Mammary epithelial cell (primary cell): ENCODE measurements at regions of chr7 and their contacts with region 1.

Region 1: GRCh38 chr7:26365077-26365900 is 73.6 kb downstream of the SNX10 start:
- DNase-seq: peak; percentile 54
- H3K4me3 ChIP-seq: no peak overlapping the region
- H3K27ac ChIP-seq: no peak overlapping the region
- H3K4me1 ChIP-seq: peaks cover 2% of the 10 kb centered on the region
- H3K27me3 ChIP-seq: no peaks in the 10 kb centered on the region
- CTCF ChIP-seq: peak; percentile 63 to 75

Region 2: GRCh38 chr7:26061688-26062150 is 303.6 kb before region 1 on chr7:
- CTCF ChIA-PET with region 1: no interaction called
- dilution Hi-C with region 1: no loop called
- in situ Hi-C with region 1: no loop called
- intact Hi-C with region 1: loop called (anchors 1 kb)
- DNase-seq: peak; percentile 56
- H3K4me3 ChIP-seq: no peak overlapping the region
- H3K27ac ChIP-seq: no peak overlapping the region
- H3K4me1 ChIP-seq: peaks cover 4% of the 10 kb centered on the region
- H3K27me3 ChIP-seq: no peaks in the 10 kb centered on the region
- CTCF ChIP-seq: peak; percentile 85 to 92

Region 3: GRCh38 chr7:26090927-26091519 is 274.3 kb before region 1 on chr7:
- CTCF ChIA-PET with region 1: no interaction called
- dilution Hi-C with region 1: no loop called
- in situ Hi-C with region 1: loop called in 1 of 2 experiments (anchors 25 kb)
- intact Hi-C with region 1: loop called (anchors 1 kb)
- DNase-seq: peak; percentile 44
- H3K4me3 ChIP-seq: no peak overlapping the region
- H3K27ac ChIP-seq: no peak overlapping the region
- H3K4me1 ChIP-seq: peaks cover 33% of the 10 kb centered on the region
- H3K27me3 ChIP-seq: no peaks in the 10 kb centered on the region
- CTCF ChIP-seq: peak; percentile 56 to 77

Region 4: DNA sequence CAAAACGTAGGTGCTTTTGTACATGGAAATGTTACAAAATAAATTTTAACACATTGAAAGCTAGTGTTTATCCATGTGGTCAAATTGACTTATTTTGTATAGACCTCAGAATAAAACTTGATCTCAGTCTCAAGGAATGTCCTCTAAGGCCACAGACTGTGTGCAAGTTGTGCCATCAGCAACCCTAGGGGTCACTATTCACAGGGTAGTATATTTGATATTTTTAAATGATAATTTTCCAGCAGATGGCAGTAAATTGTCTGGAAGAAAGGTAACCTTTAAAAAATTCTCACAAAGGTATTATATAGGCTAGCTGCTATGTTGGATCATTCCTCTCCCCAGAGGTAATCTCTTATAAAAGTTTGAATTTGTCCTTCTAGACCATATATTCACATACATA is 86.5 kb before region 1 on chr7:
- CTCF ChIA-PET with region 1: no interaction called
- dilution Hi-C with region 1: no loop called
- in situ Hi-C with region 1: no loop called
- intact Hi-C with region 1: loop called (anchors 1 kb)
- DNase-seq: peak; percentile 35
- H3K4me3 ChIP-seq: no peak overlapping the region
- H3K27ac ChIP-seq: no peak overlapping the region
- H3K4me1 ChIP-seq: no peaks in the 10 kb centered on the region
- H3K27me3 ChIP-seq: no peaks in the 10 kb centered on the region
- CTCF ChIP-seq: peak; percentile 24 to 48

Region 5: DNA sequence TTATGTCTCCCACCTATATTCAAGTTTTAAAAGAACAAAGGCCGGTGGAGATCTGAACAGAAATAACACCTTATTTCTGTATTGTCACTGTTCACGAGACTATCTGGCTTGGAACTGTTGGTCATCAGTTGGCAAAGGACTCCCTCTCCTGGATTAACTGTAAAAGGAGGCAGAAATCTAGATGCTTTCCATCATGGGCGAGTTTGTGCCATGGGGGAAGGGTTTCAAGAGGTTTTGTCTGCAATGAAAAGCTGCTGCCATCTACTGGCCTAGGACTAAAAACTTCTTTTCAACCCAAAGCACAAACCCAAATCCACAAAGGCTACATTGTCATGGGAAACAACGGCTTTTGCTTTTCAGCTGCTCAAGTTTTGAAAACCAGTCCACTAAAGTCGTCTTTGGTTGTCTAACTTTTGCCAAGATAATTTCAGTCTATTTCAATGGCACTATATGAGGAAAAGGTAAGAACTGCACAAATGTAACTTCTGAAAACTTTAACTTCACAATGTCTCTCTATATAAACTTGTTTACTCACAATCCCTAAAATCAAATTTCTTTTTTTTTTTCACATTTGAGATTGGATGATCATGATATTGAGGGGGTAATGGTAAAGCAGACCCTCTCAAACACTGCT is 302.3 kb after region 1 on chr7:
- CTCF ChIA-PET with region 1: interaction called, 12 read pairs
- dilution Hi-C with region 1: no loop called
- in situ Hi-C with region 1: loop called (anchors 5 kb)
- intact Hi-C with region 1: loop called (anchors 1 kb)
- DNase-seq: peak; percentile 86
- H3K4me3 ChIP-seq: no peak overlapping the region
- H3K27ac ChIP-seq: no peak overlapping the region
- H3K4me1 ChIP-seq: no peaks in the 10 kb centered on the region
- H3K27me3 ChIP-seq: no peaks in the 10 kb centered on the region
- CTCF ChIP-seq: peak; percentile 86 to 87

Region 6: DNA sequence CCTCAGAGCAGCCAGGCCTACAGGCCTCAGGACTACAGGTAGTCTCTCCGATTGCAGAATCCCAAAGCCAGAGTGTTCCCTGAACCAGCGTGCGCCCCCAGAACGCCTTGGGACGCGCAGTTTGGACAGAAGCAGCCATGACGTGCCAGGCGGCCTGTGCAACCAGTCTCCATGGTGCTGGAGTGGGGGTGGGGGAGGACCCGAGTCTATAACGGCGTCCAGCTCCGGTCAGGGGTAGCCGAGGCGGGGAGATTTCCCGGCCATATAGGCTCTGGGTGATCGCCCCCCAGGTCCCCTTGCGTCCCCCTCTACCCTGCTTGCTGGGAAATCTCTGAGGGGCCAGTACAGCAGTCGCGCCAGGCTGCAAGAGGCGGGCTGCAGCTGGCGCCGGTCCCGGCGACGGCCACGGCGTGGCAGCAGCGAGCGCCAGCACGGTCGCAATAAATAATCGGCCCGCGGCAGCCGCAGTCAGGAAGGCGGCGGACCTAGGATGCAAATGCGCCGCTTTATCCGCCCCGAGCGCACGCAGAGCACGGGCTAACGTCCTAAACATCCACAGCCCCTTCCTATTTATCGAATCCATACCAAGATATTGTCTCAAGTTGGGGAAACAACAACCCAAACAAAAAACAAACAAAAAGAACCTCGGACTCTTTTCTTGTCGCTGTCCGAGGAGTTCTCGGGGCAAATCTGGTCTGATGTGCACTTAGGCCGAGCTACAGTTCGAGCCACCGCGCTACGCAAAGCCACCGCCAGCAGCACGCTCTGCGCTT is 785.5 kb after region 1 on chr7:
- CTCF ChIA-PET with region 1: no interaction called
- dilution Hi-C with region 1: no loop called
- in situ Hi-C with region 1: loop called (anchors 10 kb)
- intact Hi-C with region 1: no loop called
- DNase-seq: peak; percentile 85
- H3K4me3 ChIP-seq: peak overlapping the region; percentile 53 to 60 (median 58)
- H3K27ac ChIP-seq: peak overlapping the region; percentile 46
- H3K4me1 ChIP-seq: peaks cover 70% of the 10 kb centered on the region
- H3K27me3 ChIP-seq: no peaks in the 10 kb centered on the region
- CTCF ChIP-seq: peak; percentile 73 to 88